Dendritic cell treated with granulocyte-macrophage colony-stimulating factor and Interleukin-4, amounts not matched to agents 40 ng/mL and 50 ng/mL, for 4 days (primary cell): ENCODE measurements at regions of chr6 and their contacts with region 1.

Region 1: GRCh38 chr6:32971581-32972352 is 3.4 kb downstream of the BRD2 start:
- H3K4me3 Mint-ChIP-seq: peak overlapping the region; percentile 97
- H3K27ac Mint-ChIP-seq: peak overlapping the region; percentile 100
- H3K4me1 Mint-ChIP-seq: peaks cover 40% of the 10 kb centered on the region
- H3K27me3 Mint-ChIP-seq: no peaks in the 10 kb centered on the region

Region 2: DNA sequence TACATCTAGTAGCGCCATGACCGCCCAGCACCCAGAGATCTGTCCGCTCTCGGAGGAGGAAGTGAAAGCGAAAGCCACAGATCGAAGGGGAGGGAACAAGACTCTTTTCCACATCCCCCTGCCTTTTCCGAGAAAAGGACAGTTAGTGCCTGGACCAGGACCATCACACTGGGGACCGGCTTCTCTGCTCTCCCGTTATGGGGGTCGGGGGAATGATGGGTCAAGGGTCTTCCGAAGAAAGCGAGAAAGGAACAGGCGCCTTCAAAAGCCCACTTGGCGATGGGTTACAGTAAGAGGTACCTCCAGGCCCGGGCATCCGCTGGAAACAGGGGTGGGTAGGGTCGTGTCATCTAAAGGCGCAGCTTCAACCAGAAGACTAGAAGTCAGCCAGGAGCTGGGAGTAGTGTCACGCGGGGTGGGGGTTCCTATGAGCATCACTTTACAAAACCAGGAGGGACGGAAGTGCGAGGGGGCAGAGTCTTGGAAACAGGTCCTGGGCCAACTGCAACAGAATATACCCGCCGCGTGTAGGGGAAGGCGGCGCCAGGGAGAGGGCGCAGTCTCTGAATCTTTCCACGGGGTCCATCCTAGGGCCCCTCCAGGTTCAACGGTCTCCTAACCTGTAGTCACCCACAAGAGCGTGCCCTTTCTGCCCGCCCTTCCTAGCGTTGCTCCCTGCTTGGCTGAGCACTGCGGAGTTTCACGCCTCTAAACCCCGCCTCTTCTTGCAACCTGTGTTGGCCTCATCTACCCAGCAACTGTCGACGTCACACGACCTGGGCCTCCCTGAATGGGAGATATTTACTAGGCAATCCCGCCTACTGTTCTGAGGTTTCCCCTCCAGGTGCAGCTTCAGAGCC is 127.6 kb before region 1 on chr6 and contains the start of gene PSMB8:
- intact Hi-C with region 1: loop called (anchors 5 kb)
- H3K4me3 Mint-ChIP-seq: peak within 1 kb of the TSS; percentile 91
- H3K27ac Mint-ChIP-seq: peak within 1 kb of the TSS; percentile 99
- H3K4me1 Mint-ChIP-seq: peaks cover 82% of the 10 kb centered on the region
- H3K27me3 Mint-ChIP-seq: no peaks in the 10 kb centered on the region

Region 3: GRCh38 chr6:32894080-32895005 is 77.4 kb before region 1 on chr6:
- intact Hi-C with region 1: loop called (anchors 5 kb)
- H3K4me3 Mint-ChIP-seq: peak overlapping the region; percentile 99
- H3K27ac Mint-ChIP-seq: peak overlapping the region; percentile 91
- H3K4me1 Mint-ChIP-seq: peaks cover 45% of the 10 kb centered on the region
- H3K27me3 Mint-ChIP-seq: no peaks in the 10 kb centered on the region

Region 4: GRCh38 chr6:32933636-32934085 is 38.1 kb before region 1 on chr6:
- intact Hi-C with region 1: loop called (anchors 5 kb)
- H3K4me3 Mint-ChIP-seq: no peak overlapping the region
- H3K27ac Mint-ChIP-seq: peak overlapping the region; percentile 98
- H3K4me1 Mint-ChIP-seq: peaks cover 87% of the 10 kb centered on the region
- H3K27me3 Mint-ChIP-seq: no peaks in the 10 kb centered on the region

Region 5: GRCh38 chr6:32952817-32953739 is 18.7 kb before region 1 on chr6 and contains the start of gene HLA-DMA:
- intact Hi-C with region 1: loop called (anchors 1 kb)
- H3K4me3 Mint-ChIP-seq: peak within 1 kb of the TSS; percentile 94
- H3K27ac Mint-ChIP-seq: peak within 1 kb of the TSS; percentile 98
- H3K4me1 Mint-ChIP-seq: peaks cover 70% of the 10 kb centered on the region
- H3K27me3 Mint-ChIP-seq: no peaks in the 10 kb centered on the region

Region 6: GRCh38 chr6:33213166-33213988 is 241.6 kb after region 1 on chr6:
- intact Hi-C with region 1: no loop called
- H3K4me3 Mint-ChIP-seq: peak overlapping the region; percentile 77
- H3K27ac Mint-ChIP-seq: peak overlapping the region; percentile 65
- H3K4me1 Mint-ChIP-seq: peaks cover 47% of the 10 kb centered on the region
- H3K27me3 Mint-ChIP-seq: peaks cover 54% of the 10 kb centered on the region